ENCODE measurements at regions of chr11 and their contacts with region 1.

Region 1: GRCh38 chr11:111230122-111230465 is 15.4 kb upstream of the POU2AF2 start:
- DNase-seq: peak in 1 of 3 donors; percentile 3
- ATAC-seq: peak; percentile 41
- H3K4me3 ChIP-seq: no peak overlapping the region
- H3K4me1 ChIP-seq: peaks cover 4% of the 10 kb centered on the region
- CTCF ChIP-seq: no peak

Region 2: GRCh38 chr11:110447897-110448745 is 782.0 kb before region 1 on chr11:
- intact Hi-C with region 1: loop called in 1 of 2 experiments (anchors 10 kb)
- DNase-seq: no peak
- ATAC-seq: no peak
- H3K4me3 ChIP-seq: no peak overlapping the region
- H3K4me1 ChIP-seq: no peaks in the 10 kb centered on the region
- CTCF ChIP-seq: no peak

Measured in mucosa of descending colon (tissue), 3 donors.